T-cell (primary cell): ENCODE measurements at regions of chr3 and their contacts with region 1.

Region 1: GRCh38 chr3:18758047-18758704 is 333.0 kb upstream of the SATB1 start:
- DNase-seq: peak in 17 of 35 experiments; percentile 12 to 92 (median 26)
- ATAC-seq: peak; percentile 89 to 96 (median 90)
- H3K4me3 ChIP-seq: no peak overlapping the region
- H3K4me3 Mint-ChIP-seq: no peak overlapping the region
- H3K27ac ChIP-seq: peak overlapping the region; percentile 22
- H3K27ac Mint-ChIP-seq: peak overlapping the region; percentile 25 to 57
- H3K4me1 ChIP-seq: peaks cover 0 to 45% of the 10 kb centered on the region in 2 experiments
- H3K4me1 Mint-ChIP-seq: peaks cover 39 to 44% (median 44%) of the 10 kb centered on the region in 3 donors
- H3K27me3 ChIP-seq: no peaks in the 10 kb centered on the region
- H3K27me3 Mint-ChIP-seq: no peaks in the 10 kb centered on the region

Region 2: DNA sequence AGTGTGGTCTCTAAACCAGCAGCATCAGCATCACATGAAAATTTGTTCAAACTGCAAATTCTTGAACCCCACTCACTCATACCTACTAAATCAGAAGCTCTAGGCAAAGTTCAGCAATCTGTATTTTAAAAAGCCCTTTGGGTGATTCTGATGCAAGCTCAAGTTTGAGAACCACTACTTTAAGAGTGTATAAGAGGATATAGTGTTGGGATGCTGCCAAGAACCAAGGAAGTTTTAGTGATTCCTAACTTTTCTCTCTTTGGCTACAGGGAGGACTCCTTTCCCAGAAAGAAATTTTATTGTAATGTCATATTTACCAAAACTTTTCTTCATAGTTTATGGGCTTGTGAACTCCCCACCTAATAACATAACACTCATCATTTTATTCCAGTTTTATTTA is 1437.9 kb before region 1 on chr3:
- CTCF ChIA-PET with region 1: no interaction called
- POLR2A ChIA-PET with region 1: no interaction called
- DNase-seq: no peak
- ATAC-seq: no peak
- H3K4me3 ChIP-seq: no peak overlapping the region
- H3K4me3 Mint-ChIP-seq: no peak overlapping the region
- H3K27ac ChIP-seq: no peak overlapping the region
- H3K27ac Mint-ChIP-seq: no peak overlapping the region
- H3K4me1 ChIP-seq: peaks cover 0 to 10% of the 10 kb centered on the region in 2 experiments
- H3K4me1 Mint-ChIP-seq: peaks cover 23 to 28% (median 25%) of the 10 kb centered on the region in 3 donors
- H3K27me3 ChIP-seq: no peaks in the 10 kb centered on the region
- H3K27me3 Mint-ChIP-seq: no peaks in the 10 kb centered on the region

Region 3: GRCh38 chr3:18559331-18559842 is 198.8 kb before region 1 on chr3:
- CTCF ChIA-PET with region 1: interaction called, 27 to 73 read pairs
- POLR2A ChIA-PET with region 1: no interaction called
- DNase-seq: peak in 26 of 35 experiments; percentile 2 to 69 (median 15)
- ATAC-seq: peak; percentile 46 to 72 (median 60)
- H3K4me3 ChIP-seq: no peak overlapping the region
- H3K4me3 Mint-ChIP-seq: peak overlapping the region in 1 of 3 donors; percentile 65
- H3K27ac ChIP-seq: no peak overlapping the region
- H3K27ac Mint-ChIP-seq: peak overlapping the region; percentile 71 to 85
- H3K4me1 ChIP-seq: peaks cover 10 to 23% of the 10 kb centered on the region in 2 experiments
- H3K4me1 Mint-ChIP-seq: peaks cover 51 to 53% (median 53%) of the 10 kb centered on the region in 3 donors
- H3K27me3 ChIP-seq: no peaks in the 10 kb centered on the region
- H3K27me3 Mint-ChIP-seq: no peaks in the 10 kb centered on the region

Region 4: GRCh38 chr3:18717598-18717997 is 40.6 kb before region 1 on chr3:
- CTCF ChIA-PET with region 1: interaction called, 3 to 12 read pairs
- POLR2A ChIA-PET with region 1: no interaction called
- DNase-seq: no peak
- ATAC-seq: peak in 1 of 4 experiments; percentile 39
- H3K4me3 ChIP-seq: no peak overlapping the region
- H3K4me3 Mint-ChIP-seq: peak overlapping the region in 1 of 3 donors; percentile 54
- H3K27ac ChIP-seq: peak overlapping the region; percentile 13
- H3K27ac Mint-ChIP-seq: peak overlapping the region; percentile 87 to 93
- H3K4me1 ChIP-seq: peaks cover 30 to 59% of the 10 kb centered on the region in 2 experiments
- H3K4me1 Mint-ChIP-seq: peaks cover 67 to 74% (median 72%) of the 10 kb centered on the region in 3 donors
- H3K27me3 ChIP-seq: no peaks in the 10 kb centered on the region
- H3K27me3 Mint-ChIP-seq: no peaks in the 10 kb centered on the region

Region 5: GRCh38 chr3:18740631-18741583 is 17.3 kb before region 1 on chr3:
- CTCF ChIA-PET with region 1: interaction called in 1 of 2 experiments, 10 read pairs
- POLR2A ChIA-PET with region 1: no interaction called
- DNase-seq: peak in 33 of 35 experiments; percentile 24 to 88 (median 59)
- ATAC-seq: peak; percentile 72 to 80 (median 77)
- H3K4me3 ChIP-seq: peak overlapping the region; percentile 22 to 44
- H3K4me3 Mint-ChIP-seq: peak overlapping the region; percentile 75 to 83 (median 78)
- H3K27ac ChIP-seq: peak overlapping the region; percentile 91
- H3K27ac Mint-ChIP-seq: peak overlapping the region; percentile 93 to 94
- H3K4me1 ChIP-seq: peaks cover 28 to 67% of the 10 kb centered on the region in 2 experiments
- H3K4me1 Mint-ChIP-seq: peaks cover 91 to 95% (median 92%) of the 10 kb centered on the region in 3 donors
- H3K27me3 ChIP-seq: no peaks in the 10 kb centered on the region
- H3K27me3 Mint-ChIP-seq: no peaks in the 10 kb centered on the region